Thyroid gland (tissue), 4 donors: ENCODE measurements at regions of chr9 and their contacts with region 1.

Region 1: DNA sequence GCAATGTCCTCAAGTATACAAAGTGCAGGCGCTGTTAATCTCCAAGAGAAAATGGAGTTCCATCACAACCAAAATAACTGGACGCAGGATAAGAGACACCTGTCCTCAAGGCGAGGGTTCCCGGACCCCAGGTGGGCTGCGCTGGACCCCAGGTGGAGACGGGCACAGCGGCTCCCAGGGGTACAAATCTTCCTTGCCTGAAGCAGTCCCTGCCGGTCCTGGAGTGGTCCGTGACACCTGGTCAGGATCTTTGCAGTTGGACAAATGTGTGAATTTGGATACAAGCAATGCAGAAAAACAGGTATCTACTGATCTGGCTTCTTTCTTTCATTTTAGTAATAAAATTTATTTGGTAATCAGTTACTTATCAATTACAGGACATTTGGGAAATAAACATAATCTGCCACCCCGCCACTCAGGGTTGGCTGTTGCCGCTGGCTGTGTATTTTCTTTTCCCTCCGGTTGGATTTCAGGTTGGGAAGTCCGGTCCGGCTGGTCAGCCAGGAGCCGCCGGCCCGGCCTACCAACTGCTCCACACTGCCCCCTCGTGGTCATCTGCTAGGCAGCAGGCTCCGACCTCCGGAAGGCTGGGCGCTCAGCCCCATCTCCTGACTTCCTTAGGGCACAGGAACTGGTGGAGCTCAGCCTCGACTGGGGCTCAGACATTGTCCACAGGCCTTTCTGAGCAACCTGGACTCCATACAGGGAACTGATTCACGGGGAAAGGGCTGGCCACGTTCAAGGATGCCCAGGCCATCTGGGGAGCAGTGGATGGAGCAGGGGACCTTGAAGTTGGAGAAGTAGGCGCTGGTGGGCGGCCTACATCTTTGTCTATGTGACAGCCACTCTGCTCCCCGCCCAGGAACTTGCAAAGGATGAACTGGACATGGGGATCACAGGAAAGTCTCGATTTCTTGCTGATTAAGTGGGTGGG is 43.4 kb downstream of the NXNL2 start:
- DNase-seq: peak; percentile 73 to 81
- H3K4me3 ChIP-seq: no peak overlapping the region
- H3K27ac ChIP-seq: no peak overlapping the region
- H3K4me1 ChIP-seq: peaks cover 0 to 7% of the 10 kb centered on the region in 2 donors
- H3K27me3 ChIP-seq: no peaks in the 10 kb centered on the region
- CTCF ChIP-seq: peak; percentile 80 to 98 (median 86)
- POLR2A ChIP-seq: no peak

Region 2: DNA sequence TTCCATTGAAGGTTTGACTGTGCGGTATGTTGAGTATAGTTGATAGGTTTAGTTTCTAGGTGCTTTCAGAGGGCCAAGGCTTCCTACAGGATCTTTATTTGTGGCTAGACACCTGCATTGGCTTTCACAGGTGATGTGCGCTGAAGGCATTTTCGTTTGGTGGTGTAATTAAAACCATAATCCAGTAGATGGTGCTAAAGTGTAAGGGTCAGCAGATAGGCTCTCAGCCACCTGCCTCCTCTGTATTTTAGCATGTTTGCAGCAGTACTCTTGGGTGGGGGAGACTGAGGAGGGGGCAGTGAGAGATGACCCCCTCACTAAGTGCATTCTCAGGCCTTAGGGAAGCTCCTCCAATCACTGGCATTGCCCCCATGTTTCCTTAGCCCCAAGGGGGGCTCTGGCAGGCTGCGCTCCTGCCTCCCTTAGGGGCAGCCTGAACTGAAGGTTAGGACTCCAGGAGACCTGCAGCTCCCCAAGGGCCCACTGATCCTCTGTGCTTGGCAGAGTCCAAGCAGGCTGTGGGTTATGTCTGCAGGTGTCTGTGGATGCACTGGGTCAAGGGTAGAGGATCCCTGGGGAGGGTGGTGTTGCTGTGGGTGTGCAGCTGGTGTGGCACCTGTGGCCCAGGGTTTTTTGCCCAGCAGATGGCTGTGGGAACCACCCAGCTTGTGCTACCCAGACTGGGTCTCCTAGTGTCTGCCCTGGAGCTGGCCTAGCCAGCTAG is 627.5 kb before region 1 on chr9:
- intact Hi-C with region 1: loop called (anchors 10 kb)
- DNase-seq: no peak
- H3K4me3 ChIP-seq: no peak overlapping the region
- H3K27ac ChIP-seq: no peak overlapping the region
- H3K4me1 ChIP-seq: no peaks in the 10 kb centered on the region
- H3K27me3 ChIP-seq: no peaks in the 10 kb centered on the region
- CTCF ChIP-seq: peak in 4 of 6 experiments; percentile 24 to 41 (median 35)
- POLR2A ChIP-seq: no peak

Region 3: DNA sequence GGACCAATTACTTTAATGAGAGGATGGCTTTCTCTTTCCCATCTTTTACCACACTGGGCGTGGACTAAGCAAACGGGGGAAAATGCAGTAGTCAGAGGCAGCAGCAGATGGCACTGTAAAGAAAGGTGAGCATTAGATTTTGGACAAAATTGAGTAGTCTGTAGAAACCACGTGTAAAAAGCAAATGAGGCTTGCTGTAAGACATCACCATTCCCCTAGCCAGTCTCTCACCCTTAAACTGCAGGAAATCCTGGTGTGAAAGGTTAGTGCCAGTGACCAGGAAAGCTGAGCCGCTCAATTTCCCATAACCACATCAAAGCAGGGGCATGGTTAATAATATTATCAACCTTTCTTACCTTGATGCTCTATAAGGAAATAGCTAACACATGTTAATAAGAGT is 471.9 kb before region 1 on chr9:
- intact Hi-C with region 1: loop called (anchors 5 kb)
- DNase-seq: peak; percentile 37 to 39
- H3K4me3 ChIP-seq: no peak overlapping the region
- H3K27ac ChIP-seq: no peak overlapping the region
- H3K4me1 ChIP-seq: no peaks in the 10 kb centered on the region
- H3K27me3 ChIP-seq: no peaks in the 10 kb centered on the region
- CTCF ChIP-seq: peak in 4 of 6 experiments; percentile 50 to 72 (median 64)
- POLR2A ChIP-seq: no peak

Region 4: DNA sequence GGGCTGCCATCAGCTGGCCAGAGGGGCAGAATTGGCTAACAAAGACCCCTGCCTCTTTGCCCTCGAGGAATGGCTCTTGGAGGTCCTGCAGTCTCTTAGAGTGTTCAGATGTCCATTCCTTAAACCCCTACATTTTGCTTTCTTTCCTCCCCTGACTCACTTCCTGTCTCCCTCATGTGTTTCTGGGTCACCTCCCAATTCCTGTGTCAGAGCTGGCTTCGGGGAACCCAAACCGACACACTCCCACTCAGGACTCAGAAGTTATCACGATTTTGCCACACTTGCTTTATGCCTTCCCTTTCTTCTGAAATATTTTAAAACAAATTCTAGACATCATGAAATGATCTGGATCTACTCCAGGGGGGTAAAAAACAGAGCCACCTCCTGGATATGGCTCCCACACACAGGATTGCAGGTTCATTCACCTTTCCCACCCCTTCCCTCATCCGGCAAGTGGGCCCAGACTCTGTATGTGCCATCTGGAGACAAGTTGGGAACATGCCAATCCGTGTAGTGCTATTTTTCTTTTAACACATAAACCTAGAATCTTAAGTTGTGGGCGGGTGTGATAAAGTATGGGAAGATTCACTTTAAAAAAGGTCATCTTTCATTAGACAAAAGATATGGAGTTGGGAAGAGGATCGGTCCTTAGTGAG is 102.2 kb after region 1 on chr9:
- intact Hi-C with region 1: no loop called
- DNase-seq: no peak
- H3K4me3 ChIP-seq: no peak overlapping the region
- H3K27ac ChIP-seq: no peak overlapping the region
- H3K4me1 ChIP-seq: no peaks in the 10 kb centered on the region
- H3K27me3 ChIP-seq: no peaks in the 10 kb centered on the region
- CTCF ChIP-seq: no peak
- POLR2A ChIP-seq: no peak

Region 5: DNA sequence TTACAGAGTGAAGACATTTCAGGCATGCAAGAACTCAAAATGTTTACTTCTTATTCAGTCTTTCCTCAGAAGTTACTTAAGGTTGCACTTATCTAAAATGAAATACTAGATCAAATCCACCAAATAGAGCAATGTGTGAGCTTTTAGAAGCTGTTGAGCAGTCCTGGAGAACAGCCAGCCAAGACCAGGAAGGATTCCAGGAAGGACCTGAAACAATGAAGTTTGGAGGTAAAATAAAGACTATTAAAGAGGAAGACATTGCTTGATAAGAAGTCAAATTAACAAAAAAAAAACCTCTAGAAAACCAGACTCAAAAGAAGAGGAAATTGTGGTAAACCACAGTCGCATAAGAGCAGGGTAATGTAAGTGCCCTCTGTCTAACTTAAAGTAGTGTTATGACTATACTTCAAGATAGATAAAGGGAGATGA is 256.7 kb after region 1 on chr9:
- intact Hi-C with region 1: no loop called
- DNase-seq: peak; percentile 32 to 39
- H3K4me3 ChIP-seq: no peak overlapping the region
- H3K27ac ChIP-seq: no peak overlapping the region
- H3K4me1 ChIP-seq: no peaks in the 10 kb centered on the region
- H3K27me3 ChIP-seq: no peaks in the 10 kb centered on the region
- CTCF ChIP-seq: no peak
- POLR2A ChIP-seq: no peak